Thyroid gland (tissue), 4 donors: ENCODE measurements at regions of chr4 and their contacts with region 1.

Region 1: GRCh38 chr4:40736910-40737309 is 12.8 kb upstream of the NSUN7 start:
- DNase-seq: no peak
- H3K4me3 ChIP-seq: no peak overlapping the region
- H3K27ac ChIP-seq: no peak overlapping the region
- H3K4me1 ChIP-seq: peaks cover under 1 to 2% of the 10 kb centered on the region in 2 donors
- H3K27me3 ChIP-seq: no peaks in the 10 kb centered on the region
- CTCF ChIP-seq: peak in 3 of 6 experiments; percentile 50 to 65 (median 57)
- POLR2A ChIP-seq: no peak

Region 2: GRCh38 chr4:40247350-40247749 is 489.6 kb before region 1 on chr4:
- intact Hi-C with region 1: no loop called
- DNase-seq: no peak
- H3K4me3 ChIP-seq: no peak overlapping the region
- H3K27ac ChIP-seq: no peak overlapping the region
- H3K4me1 ChIP-seq: no peaks in the 10 kb centered on the region
- H3K27me3 ChIP-seq: no peaks in the 10 kb centered on the region
- CTCF ChIP-seq: no peak
- POLR2A ChIP-seq: no peak

Region 3: DNA sequence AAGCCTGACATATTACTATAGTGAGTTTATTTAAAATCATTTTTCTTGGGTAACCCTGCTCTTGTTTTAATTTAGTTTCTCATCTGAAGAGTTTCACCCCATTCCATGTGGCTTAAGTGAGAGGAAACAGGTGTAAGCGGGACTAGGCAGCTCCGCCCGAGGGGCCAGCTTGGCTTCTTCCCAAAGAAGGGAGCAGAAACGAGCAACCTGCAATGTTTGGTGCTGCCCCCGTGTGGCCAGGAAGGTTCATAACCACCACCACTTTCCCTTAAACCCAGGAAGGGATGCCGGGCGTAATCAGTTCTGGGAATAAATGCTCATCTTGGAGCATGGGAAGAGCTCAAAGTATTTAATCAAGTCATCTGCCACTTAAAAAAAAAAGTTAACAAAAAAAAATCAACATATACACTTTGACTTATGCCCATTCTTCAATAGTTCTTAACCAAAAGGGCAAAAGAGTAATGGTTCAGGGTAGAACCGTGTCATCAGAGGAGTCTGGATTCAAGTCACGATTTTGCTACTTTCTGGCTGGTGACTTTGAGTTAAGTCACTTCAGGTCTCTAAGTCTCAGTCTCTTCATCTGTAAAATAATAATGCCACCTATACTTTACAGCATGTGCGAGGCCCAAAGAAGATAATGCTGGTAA is 160.8 kb after region 1 on chr4:
- intact Hi-C with region 1: loop called (anchors 5 kb)
- DNase-seq: peak; percentile 76 to 81
- H3K4me3 ChIP-seq: no peak overlapping the region
- H3K27ac ChIP-seq: no peak overlapping the region
- H3K4me1 ChIP-seq: peaks cover 0 to 3% of the 10 kb centered on the region in 2 donors
- H3K27me3 ChIP-seq: no peaks in the 10 kb centered on the region
- CTCF ChIP-seq: peak; percentile 56 to 85 (median 74)
- POLR2A ChIP-seq: no peak